Activated B cell treated with CpG ODN at 0.5 μM for 24 hours (primary cell): ENCODE measurements at regions of chr12 and their contacts with region 1.

Region 1: GRCh38 chr12:92145731-92146496 is at the start of gene BTG1:
- DNase-seq: peak; percentile 89
- ATAC-seq: peak; percentile 75
- H3K4me3 Mint-ChIP-seq: peak within 1 kb of the TSS; percentile 98
- H3K27ac Mint-ChIP-seq: peak within 1 kb of the TSS; percentile 99
- H3K4me1 Mint-ChIP-seq: peaks cover 39% of the 10 kb centered on the region
- H3K27me3 Mint-ChIP-seq: no peaks in the 10 kb centered on the region
- CTCF ChIP-seq: no peak
- total RNA-seq, gene BTG1: 423 and 429 TPM in 2 replicates

Region 2: DNA sequence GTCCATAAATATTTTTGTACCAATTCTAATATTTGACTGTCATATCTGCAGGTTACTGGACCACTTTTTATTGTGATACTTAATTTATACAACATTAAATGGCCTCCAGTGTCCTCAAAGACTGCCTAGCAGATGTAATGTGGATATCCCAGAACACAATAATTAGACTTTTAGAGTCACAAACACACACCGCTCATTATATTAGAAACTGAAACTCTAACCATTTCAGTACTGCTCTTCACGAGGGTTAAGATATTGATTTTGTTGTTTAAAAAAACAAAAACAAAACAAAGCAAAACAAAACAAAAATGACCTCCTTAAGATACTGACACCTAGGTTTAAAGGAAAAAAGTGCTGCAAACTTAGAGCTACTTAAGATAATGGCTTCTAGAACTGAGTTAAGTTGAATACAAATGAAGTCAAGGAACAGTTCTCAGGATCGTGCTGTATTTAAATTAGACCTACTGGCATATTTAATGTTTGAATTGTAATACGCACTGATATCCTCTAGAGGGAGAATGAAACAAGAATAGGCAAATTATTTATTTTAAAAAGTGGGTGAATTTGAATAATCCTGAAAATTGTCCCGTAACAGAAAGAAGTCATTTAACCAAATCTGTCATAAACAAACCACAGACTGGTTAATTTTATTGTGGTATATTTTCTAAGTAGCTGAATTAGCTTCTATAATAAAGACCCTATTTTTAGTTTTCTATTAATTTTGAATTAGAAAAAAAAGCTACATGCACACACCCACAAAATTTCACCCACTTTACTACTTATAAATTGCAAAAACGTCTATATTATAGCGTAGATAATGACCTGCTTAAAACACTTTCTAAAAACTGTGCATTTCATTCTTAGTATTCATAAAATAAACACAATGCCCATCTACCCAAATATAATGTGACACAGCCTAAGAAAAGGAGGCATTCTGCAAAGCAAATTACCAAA is 568.1 kb before region 1 on chr12:
- CTCF ChIA-PET with region 1: no interaction called
- POLR2A ChIA-PET with region 1: interaction called, 6 read pairs
- intact Hi-C with region 1: loop called (anchors 1 kb)
- DNase-seq: no peak
- ATAC-seq: peak; percentile 58
- H3K4me3 Mint-ChIP-seq: peak overlapping the region; percentile 70
- H3K27ac Mint-ChIP-seq: no peak overlapping the region
- H3K4me1 Mint-ChIP-seq: peaks cover 6% of the 10 kb centered on the region
- H3K27me3 Mint-ChIP-seq: peaks cover 7% of the 10 kb centered on the region
- CTCF ChIP-seq: peak; percentile 57

Region 3: DNA sequence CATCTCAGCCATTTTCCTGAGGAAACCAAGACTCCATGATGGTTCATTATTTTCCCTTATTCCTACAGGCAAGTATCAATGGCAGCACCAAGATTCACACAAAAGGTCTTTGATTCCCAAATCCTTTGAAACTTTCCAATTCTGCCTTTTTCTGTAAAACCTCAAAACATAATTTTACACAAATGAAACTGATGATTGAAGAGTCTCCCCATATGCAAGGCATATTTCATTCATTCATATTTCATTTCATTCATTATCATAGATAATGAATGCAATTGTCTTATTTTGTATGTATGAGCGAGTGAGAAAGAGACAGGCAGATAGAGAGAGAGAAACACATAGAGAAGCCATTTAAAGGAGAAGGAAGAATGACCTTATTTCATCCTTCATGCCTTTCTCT is 173.0 kb before region 1 on chr12:
- CTCF ChIA-PET with region 1: no interaction called
- POLR2A ChIA-PET with region 1: no interaction called
- intact Hi-C with region 1: no loop called
- DNase-seq: no peak
- ATAC-seq: no peak
- H3K4me3 Mint-ChIP-seq: no peak overlapping the region
- H3K27ac Mint-ChIP-seq: no peak overlapping the region
- H3K4me1 Mint-ChIP-seq: no peaks in the 10 kb centered on the region
- H3K27me3 Mint-ChIP-seq: no peaks in the 10 kb centered on the region
- CTCF ChIP-seq: no peak

Region 4: GRCh38 chr12:92123780-92124688 is 21.9 kb before region 1 on chr12:
- CTCF ChIA-PET with region 1: no interaction called
- POLR2A ChIA-PET with region 1: interaction called, 12 read pairs
- intact Hi-C with region 1: no loop called
- DNase-seq: no peak
- ATAC-seq: no peak
- H3K4me3 Mint-ChIP-seq: peak overlapping the region; percentile 1
- H3K27ac Mint-ChIP-seq: peak overlapping the region; percentile 70
- H3K4me1 Mint-ChIP-seq: peaks cover 42% of the 10 kb centered on the region
- H3K27me3 Mint-ChIP-seq: no peaks in the 10 kb centered on the region
- CTCF ChIP-seq: no peak

Region 5: DNA sequence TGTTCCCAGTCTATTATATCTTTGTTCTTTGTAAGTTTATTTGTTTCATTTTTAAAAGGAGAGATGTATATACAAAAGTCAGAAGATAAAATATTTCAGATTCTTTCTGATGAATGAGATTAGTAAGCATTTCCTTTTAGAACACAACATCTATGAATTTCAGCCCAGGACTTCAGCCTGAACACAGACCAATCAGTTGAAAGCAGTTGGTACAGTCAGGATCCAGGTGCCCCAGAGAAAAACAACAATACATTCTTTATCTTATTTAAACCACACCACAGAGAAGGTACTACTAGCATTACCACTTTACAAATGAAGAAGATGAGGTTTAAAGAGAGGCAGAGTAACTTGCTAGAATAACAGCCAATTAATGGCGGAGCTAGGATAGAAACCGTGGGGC is 113.9 kb after region 1 on chr12:
- CTCF ChIA-PET with region 1: no interaction called
- POLR2A ChIA-PET with region 1: interaction called, 10 read pairs
- intact Hi-C with region 1: no loop called
- DNase-seq: no peak
- ATAC-seq: no peak
- H3K4me3 Mint-ChIP-seq: no peak overlapping the region
- H3K27ac Mint-ChIP-seq: no peak overlapping the region
- H3K4me1 Mint-ChIP-seq: peaks cover 24% of the 10 kb centered on the region
- H3K27me3 Mint-ChIP-seq: no peaks in the 10 kb centered on the region
- CTCF ChIP-seq: no peak

Region 6: GRCh38 chr12:92408072-92408900 is 262.4 kb after region 1 on chr12:
- CTCF ChIA-PET with region 1: interaction called, 23 read pairs
- POLR2A ChIA-PET with region 1: interaction called, 346 read pairs
- intact Hi-C with region 1: loop called (anchors 1 kb)
- DNase-seq: no peak
- ATAC-seq: peak; percentile 42
- H3K4me3 Mint-ChIP-seq: peak overlapping the region; percentile 50
- H3K27ac Mint-ChIP-seq: peak overlapping the region; percentile 88
- H3K4me1 Mint-ChIP-seq: peaks cover 68% of the 10 kb centered on the region
- H3K27me3 Mint-ChIP-seq: no peaks in the 10 kb centered on the region
- CTCF ChIP-seq: no peak

Region 7: GRCh38 chr12:92493816-92494215 is 347.9 kb after region 1 on chr12:
- CTCF ChIA-PET with region 1: no interaction called
- POLR2A ChIA-PET with region 1: interaction called, 19 read pairs
- intact Hi-C with region 1: loop called (anchors 5 kb)
- DNase-seq: no peak
- ATAC-seq: peak; percentile 33
- H3K4me3 Mint-ChIP-seq: no peak overlapping the region
- H3K27ac Mint-ChIP-seq: peak overlapping the region; percentile 80
- H3K4me1 Mint-ChIP-seq: peaks cover 75% of the 10 kb centered on the region
- H3K27me3 Mint-ChIP-seq: no peaks in the 10 kb centered on the region
- CTCF ChIP-seq: no peak

Region 8: DNA sequence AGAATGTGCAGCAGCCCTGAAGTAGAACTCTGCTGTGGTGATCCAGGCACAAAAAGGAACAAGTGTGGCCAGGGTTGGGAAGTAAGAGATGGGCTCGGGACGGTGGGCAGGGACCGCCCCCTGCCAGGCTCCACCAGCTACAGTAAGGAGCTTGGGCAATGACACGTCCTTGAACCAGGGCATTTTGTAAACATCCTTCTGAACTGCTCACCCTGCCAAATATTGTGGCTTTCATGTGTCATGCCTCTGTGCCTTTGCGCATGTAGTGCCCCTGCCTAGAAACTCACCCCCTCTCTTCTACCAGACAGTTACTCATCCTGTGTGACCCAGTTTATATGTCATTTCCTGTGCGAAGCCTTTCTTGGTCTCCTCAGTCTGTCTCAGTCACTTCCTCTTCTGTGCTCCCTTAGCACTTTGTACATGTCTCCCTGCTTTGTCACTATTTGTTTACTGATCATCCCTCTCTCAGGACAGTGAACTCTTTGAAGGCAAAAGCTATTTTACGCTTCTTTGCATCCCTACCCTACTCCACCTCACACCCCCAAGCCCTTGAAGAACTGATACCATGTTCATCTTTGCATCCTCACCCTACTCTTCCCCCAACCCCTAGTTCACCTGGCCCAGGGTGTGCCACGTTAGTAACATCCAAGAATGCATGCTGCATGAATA is 448.0 kb after region 1 on chr12:
- CTCF ChIA-PET with region 1: no interaction called
- POLR2A ChIA-PET with region 1: interaction called, 33 read pairs
- intact Hi-C with region 1: loop called (anchors 1 kb)
- DNase-seq: peak; percentile 49
- ATAC-seq: peak; percentile 92
- H3K4me3 Mint-ChIP-seq: peak overlapping the region; percentile 75
- H3K27ac Mint-ChIP-seq: peak overlapping the region; percentile 96
- H3K4me1 Mint-ChIP-seq: peaks cover 46% of the 10 kb centered on the region
- H3K27me3 Mint-ChIP-seq: no peaks in the 10 kb centered on the region
- CTCF ChIP-seq: no peak